Activated naive CD4-positive, alpha-beta T cell treated with anti-CD3 and anti-CD28 coated beads, Interleukin-2, amount 10 ng/mL, durations not matched to agents 7 days and 5 days (primary cell): ENCODE measurements at regions of chr11 and their contacts with region 1.

Region 1: DNA sequence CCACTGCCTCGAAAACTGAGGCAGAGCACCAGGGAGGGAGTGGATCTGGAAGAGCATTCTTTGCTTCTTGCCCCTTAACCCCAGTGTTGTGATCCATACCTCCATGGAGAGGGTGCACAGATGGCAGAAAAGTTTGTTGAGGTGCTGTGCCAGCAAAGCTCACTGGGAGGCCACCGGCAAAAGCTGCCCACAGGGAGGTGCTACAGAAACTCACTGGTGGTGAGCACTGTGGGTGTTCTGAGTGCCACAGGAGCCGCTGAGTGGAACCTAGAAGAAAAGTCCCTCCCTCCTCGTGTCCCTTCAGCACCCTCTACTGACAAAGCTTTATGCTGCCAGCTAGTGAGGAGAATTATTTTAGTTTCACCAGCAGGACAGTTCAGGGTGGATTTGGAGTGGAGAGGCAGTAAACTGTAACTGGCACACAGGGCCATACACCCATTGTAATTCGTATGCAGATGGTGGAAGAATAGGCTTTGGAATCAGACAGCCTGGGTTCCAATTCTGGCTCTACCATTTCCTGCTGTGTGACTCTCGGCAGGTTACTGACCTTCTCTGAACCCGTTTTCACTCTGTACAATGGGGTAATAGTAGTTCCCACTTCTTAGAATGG is 84.6 kb downstream of the SWAP70 start:
- DNase-seq: peak; percentile 80
- H3K4me3 Mint-ChIP-seq: no peak overlapping the region
- H3K27ac Mint-ChIP-seq: no peak overlapping the region
- H3K4me1 Mint-ChIP-seq: peaks cover 18% of the 10 kb centered on the region
- H3K27me3 Mint-ChIP-seq: peaks cover 4% of the 10 kb centered on the region

Region 2: DNA sequence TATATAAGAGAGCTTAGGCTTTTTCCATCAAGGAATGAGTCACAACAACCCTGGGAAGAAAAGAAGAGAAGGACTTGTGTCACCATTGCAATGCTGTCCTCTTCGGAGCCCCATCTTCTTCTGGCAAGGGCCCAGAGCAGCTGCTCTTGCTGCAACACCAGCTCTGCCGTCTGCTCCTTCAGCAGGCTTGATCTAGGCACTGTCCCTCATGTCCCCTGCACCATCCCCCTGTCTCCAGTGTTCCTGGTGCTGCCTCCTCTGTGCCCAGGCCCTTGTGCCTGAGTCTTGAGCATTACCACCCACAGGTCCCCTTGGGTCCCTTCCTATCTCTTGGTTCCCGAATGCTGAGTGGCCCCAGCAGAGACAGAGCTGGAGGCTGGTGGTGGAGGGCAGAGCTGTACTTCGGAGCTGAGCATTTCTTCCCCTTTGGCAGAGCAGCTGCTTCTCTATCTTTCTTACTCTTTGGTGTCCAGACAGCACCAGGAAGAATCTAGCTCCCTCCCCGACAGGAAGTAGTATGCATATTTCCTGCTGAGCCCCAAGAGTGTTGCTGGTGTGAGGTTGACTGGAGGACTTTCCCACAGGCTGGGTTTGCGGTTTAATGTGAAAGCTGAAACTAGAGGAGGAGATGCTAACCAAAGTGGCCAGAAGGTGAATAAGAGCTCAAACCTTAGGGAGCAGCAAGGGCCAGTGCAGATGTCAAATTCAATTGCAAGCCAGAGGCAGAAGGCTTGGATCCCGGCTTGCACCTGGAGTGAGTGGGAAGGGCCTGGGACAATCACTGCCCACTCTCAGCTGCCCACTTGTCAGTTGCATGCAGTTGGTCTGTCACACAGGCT is 147.2 kb before region 1 on chr11:
- CTCF ChIA-PET with region 1: interaction called, 18 read pairs
- DNase-seq: peak; percentile 82
- H3K4me3 Mint-ChIP-seq: peak overlapping the region; percentile 69
- H3K27ac Mint-ChIP-seq: peak overlapping the region; percentile 88
- H3K4me1 Mint-ChIP-seq: peaks cover 29% of the 10 kb centered on the region
- H3K27me3 Mint-ChIP-seq: peaks cover 15% of the 10 kb centered on the region

Region 3: DNA sequence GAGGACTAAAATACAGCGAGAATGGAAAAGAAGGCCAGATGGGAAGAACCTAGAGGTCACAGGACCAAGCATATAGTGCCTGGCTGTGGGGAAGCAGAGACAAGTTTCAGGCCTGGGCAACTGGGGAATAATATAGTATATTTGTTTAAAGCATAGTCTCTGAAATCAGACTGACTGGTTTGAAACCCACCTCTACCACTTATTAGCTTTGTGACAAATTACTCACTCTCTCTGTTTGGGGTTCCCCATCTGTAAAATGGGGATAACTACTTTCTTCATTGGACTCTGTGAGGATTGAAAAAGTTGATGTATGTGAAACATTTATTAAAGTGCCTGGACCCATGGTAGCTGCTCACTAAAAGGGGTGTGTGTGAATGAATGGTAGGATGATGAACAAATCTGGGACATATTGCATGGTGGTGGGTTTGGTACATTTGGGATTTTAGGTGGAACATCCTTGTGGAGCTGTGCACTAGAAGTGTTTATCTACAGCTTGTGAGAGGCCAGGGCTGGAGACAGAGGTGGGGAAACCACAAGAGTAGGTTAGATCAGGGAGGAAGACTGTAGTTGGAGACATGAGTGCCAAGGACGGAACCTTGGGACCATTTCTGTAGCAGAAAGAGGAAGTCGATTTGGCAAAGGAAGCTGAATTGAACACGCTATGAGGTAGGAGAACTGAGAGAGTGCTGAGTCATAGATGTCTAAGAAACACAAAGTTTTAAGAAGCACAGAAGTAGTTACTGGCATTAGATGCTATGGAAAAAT is 32.0 kb before region 1 on chr11:
- CTCF ChIA-PET with region 1: interaction called, 19 read pairs
- DNase-seq: no peak
- H3K4me3 Mint-ChIP-seq: no peak overlapping the region
- H3K27ac Mint-ChIP-seq: no peak overlapping the region
- H3K4me1 Mint-ChIP-seq: peaks cover 29% of the 10 kb centered on the region
- H3K27me3 Mint-ChIP-seq: no peaks in the 10 kb centered on the region